PC-3 (cell line): ENCODE measurements at regions of chr9 and their contacts with region 1.

Region 1: GRCh38 chr9:111610845-111611244 is 11.4 kb upstream of the PTGR1 start:
- DNase-seq: no peak
- ATAC-seq: no peak
- H3K4me3 ChIP-seq: no peak overlapping the region
- H3K27ac ChIP-seq: no peak overlapping the region
- H3K4me1 ChIP-seq: no peaks in the 10 kb centered on the region
- H3K27me3 ChIP-seq: no peaks in the 10 kb centered on the region
- CTCF ChIP-seq: no peak

Region 2: GRCh38 chr9:111548623-111549022 is 62.2 kb before region 1 on chr9:
- CTCF ChIA-PET with region 1: no interaction called
- POLR2A ChIA-PET with region 1: no interaction called
- intact Hi-C with region 1: no loop called
- DNase-seq: no peak
- ATAC-seq: no peak
- H3K4me3 ChIP-seq: no peak overlapping the region
- H3K27ac ChIP-seq: no peak overlapping the region
- H3K4me1 ChIP-seq: no peaks in the 10 kb centered on the region
- H3K27me3 ChIP-seq: no peaks in the 10 kb centered on the region
- CTCF ChIP-seq: no peak

Region 3: GRCh38 chr9:111621895-111622480 is 11.1 kb after region 1 on chr9:
- CTCF ChIA-PET with region 1: no interaction called
- POLR2A ChIA-PET with region 1: interaction called, 16 read pairs
- intact Hi-C with region 1: no loop called
- DNase-seq: peak; percentile 52
- ATAC-seq: peak; percentile 88
- H3K4me3 ChIP-seq: no peak overlapping the region
- H3K27ac ChIP-seq: no peak overlapping the region
- H3K4me1 ChIP-seq: no peaks in the 10 kb centered on the region; the same call in 1 of the 2 replicates
- H3K27me3 ChIP-seq: no peaks in the 10 kb centered on the region
- CTCF ChIP-seq: peak; percentile 72

Region 4: DNA sequence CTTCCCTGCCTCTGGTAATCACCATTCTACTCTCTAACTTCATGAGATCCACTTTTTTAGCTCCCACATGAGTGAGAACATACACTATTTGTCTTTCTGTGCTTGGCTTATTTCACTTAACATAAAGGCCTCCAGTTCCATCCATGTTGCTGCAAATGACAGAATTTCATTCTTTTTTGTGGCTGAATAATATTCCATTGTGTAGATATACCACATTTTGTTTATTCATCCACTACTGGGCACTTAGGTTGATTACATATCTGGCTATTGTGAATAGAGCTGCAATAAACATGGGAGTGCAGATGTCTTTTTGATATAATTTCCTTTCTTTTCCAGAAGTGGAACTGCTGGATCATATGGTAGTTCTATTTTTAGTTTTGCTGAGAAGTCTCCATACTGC is 155.2 kb after region 1 on chr9:
- CTCF ChIA-PET with region 1: no interaction called
- POLR2A ChIA-PET with region 1: no interaction called
- intact Hi-C with region 1: no loop called
- DNase-seq: no peak
- ATAC-seq: no peak
- H3K4me3 ChIP-seq: no peak overlapping the region
- H3K27ac ChIP-seq: no peak overlapping the region
- H3K4me1 ChIP-seq: no peaks in the 10 kb centered on the region
- H3K27me3 ChIP-seq: no peaks in the 10 kb centered on the region
- CTCF ChIP-seq: no peak